Mammary epithelial cell (primary cell): ENCODE measurements at regions of chr13 and their contacts with region 1.

Region 1: DNA sequence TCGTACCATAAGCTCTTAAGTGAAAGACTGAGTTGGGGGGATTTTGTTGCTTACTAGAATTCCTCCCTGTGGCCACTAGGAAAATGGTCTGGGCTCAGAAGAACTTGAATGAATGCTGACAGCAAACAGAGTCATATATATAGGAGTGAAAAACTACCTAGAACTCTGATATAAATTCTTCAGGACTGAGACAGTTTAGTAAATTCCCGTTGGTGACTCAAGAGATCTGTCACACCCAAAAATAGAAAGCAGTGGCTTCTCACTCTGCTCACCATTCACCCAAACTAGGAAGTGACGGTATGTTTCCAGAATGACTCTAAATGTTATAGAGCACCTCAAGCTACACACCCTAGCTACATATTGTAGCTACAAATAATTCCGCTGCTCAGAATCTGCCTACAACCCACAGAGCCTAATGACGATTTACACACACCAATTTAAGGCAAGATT is 116.2 kb downstream of the TBC1D4 start:
- DNase-seq: peak; percentile 94
- H3K4me3 ChIP-seq: no peak overlapping the region
- H3K27ac ChIP-seq: peak overlapping the region; percentile 79
- H3K4me1 ChIP-seq: peaks cover 53% of the 10 kb centered on the region
- H3K27me3 ChIP-seq: no peaks in the 10 kb centered on the region
- CTCF ChIP-seq: peak; percentile 27

Region 2: DNA sequence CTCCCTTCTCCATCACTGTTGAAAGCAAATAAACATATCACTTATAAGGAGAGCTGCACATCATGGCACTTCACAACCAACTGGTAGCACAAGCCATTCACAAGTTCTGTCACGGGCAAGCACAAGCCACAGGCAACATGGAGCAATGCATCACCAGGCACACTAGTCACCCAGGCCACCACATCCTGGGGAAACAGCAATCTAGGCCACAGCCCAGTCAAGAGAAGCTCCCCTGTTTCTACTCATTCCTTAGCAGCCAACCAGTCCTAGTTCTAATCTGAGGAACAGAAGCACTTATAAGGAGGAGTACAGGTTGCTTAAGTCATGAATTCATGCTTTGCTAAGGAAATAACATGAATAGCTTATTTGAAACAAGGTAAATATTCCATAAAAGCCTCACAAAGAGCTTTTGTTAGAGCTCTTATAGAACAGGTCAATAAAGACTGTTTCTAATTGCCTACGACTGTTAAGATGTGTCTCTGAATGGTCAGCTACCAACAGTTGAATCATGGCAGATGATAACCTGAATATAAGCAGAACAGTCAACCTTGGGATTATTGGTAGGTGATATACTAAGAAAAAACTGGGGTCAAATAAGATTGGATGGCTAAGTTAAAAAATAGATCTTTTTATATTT is 52.7 kb before region 1 on chr13:
- CTCF ChIA-PET with region 1: no interaction called
- dilution Hi-C with region 1: no loop called
- in situ Hi-C with region 1: no loop called
- intact Hi-C with region 1: no loop called
- DNase-seq: no peak
- H3K4me3 ChIP-seq: no peak overlapping the region
- H3K27ac ChIP-seq: no peak overlapping the region
- H3K4me1 ChIP-seq: no peaks in the 10 kb centered on the region
- H3K27me3 ChIP-seq: no peaks in the 10 kb centered on the region
- CTCF ChIP-seq: no peak

Region 3: GRCh38 chr13:75326173-75327134 is 39.3 kb before region 1 on chr13:
- CTCF ChIA-PET with region 1: interaction called, 3 read pairs
- dilution Hi-C with region 1: no loop called
- in situ Hi-C with region 1: no loop called
- intact Hi-C with region 1: loop called (anchors 5 kb)
- DNase-seq: peak; percentile 47
- H3K4me3 ChIP-seq: peak overlapping the region; percentile 10 to 31 (median 28)
- H3K27ac ChIP-seq: peak overlapping the region; percentile 33
- H3K4me1 ChIP-seq: peaks cover 35% of the 10 kb centered on the region
- H3K27me3 ChIP-seq: no peaks in the 10 kb centered on the region
- CTCF ChIP-seq: no peak

Region 4: GRCh38 chr13:75437582-75438318 is 72.0 kb after region 1 on chr13:
- CTCF ChIA-PET with region 1: no interaction called
- dilution Hi-C with region 1: no loop called
- in situ Hi-C with region 1: no loop called
- intact Hi-C with region 1: no loop called
- DNase-seq: no peak
- H3K4me3 ChIP-seq: no peak overlapping the region
- H3K27ac ChIP-seq: no peak overlapping the region
- H3K4me1 ChIP-seq: no peaks in the 10 kb centered on the region
- H3K27me3 ChIP-seq: no peaks in the 10 kb centered on the region
- CTCF ChIP-seq: no peak

Region 5: GRCh38 chr13:75549262-75550158 is 183.8 kb after region 1 on chr13 and contains the start of gene UCHL3:
- CTCF ChIA-PET with region 1: no interaction called
- dilution Hi-C with region 1: no loop called
- in situ Hi-C with region 1: loop called in 1 of 2 experiments (anchors 10 kb)
- intact Hi-C with region 1: no loop called
- DNase-seq: peak; percentile 91
- H3K4me3 ChIP-seq: peak within 1 kb of the TSS; percentile 78 to 98 (median 84)
- H3K27ac ChIP-seq: peak within 1 kb of the TSS; percentile 95
- H3K4me1 ChIP-seq: peaks cover 13% of the 10 kb centered on the region
- H3K27me3 ChIP-seq: no peaks in the 10 kb centered on the region
- CTCF ChIP-seq: peak; percentile 78 to 94
- total RNA-seq, gene UCHL3: 82.3 to 85.4 TPM

Region 6: DNA sequence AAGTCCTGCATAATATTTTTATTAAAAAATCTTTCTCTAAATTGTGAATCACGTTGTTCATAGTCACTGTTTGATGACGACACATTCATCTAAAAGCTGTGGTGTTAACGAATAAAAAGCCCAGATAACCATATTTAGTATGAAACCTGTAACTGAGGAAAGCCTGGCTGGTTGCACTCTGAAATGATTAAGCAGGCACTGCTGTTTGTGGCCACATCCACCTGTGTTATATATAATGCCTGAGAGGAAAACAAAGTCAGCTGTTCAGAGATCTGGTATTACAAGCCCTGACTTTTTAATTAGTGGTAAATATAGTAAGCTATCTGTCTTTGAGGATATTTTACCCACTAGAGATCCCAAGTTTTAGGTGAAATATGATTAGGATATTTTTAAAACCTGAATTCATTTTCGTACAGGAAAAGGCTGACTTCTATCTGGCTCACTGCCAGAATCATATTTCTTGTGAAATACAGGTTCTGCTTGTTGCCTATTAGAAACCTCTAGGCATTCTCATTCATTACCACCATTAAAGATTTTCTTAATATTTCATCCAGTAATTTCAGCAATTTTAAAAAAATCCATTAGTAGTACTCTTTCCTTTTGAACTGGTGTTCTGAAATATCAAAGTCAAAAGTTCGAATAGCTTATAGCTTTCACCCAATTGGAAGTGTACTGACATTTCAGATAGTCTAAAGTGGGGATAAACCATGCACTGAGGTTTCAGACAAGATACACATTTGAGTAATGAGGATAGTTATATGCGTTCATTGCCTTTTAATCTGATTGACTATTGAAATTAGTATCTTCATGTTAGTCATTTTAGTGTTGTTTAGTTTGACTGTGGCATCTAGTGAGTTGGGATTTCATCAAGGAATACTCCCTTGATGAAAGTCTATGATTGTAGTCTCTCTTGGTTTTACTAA is 350.1 kb after region 1 on chr13:
- CTCF ChIA-PET with region 1: no interaction called
- dilution Hi-C with region 1: no loop called
- in situ Hi-C with region 1: no loop called
- intact Hi-C with region 1: no loop called
- DNase-seq: peak; percentile 53
- H3K4me3 ChIP-seq: no peak overlapping the region
- H3K27ac ChIP-seq: peak overlapping the region; percentile 94
- H3K4me1 ChIP-seq: peaks cover 10% of the 10 kb centered on the region
- H3K27me3 ChIP-seq: no peaks in the 10 kb centered on the region
- CTCF ChIP-seq: no peak